ENCODE measurements at regions of chr18 and their contacts with region 1.

Region 1: DNA sequence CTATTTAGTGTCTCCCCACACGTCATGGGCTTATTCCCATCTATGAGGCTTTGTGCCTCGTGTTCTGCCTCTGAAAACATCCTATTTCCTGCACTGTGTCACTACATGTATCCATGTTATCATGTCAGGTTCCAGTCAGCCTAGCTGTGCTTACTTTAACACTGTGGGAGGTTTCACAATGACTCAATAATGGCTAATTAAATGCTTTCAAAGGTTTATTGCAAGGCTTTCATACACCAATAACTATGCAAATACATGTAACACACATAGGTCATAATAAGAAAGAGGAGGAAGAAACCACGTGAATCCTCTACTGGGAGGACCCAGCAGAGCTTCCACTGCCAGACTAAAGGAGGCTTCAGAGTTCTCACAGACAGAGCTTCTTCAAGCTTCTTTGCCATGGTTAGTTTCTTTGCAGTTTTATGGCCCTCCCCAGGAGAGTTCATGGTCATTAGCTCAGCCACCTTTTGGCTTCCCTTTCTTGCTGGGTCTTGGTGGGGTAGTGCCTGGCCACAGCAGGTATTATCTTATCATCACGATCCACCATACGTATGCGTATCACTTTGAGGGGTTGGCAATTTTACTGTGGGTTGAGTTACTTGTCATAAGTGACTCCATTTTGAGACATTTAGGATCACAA is 5.1 kb upstream of the COLEC12 start:
- DNase-seq: peak; percentile 62
- ATAC-seq: peak; percentile 92
- H3K4me3 ChIP-seq: no peak overlapping the region
- H3K27ac ChIP-seq: no peak overlapping the region
- H3K4me1 ChIP-seq: peaks cover 2% of the 10 kb centered on the region; the same call in 1 of the 2 replicates
- H3K27me3 ChIP-seq: peaks cover 5% of the 10 kb centered on the region in 2 experiments; a peak in 1 of 4 replicates
- CTCF ChIP-seq: no peak
- EP300 ChIP-seq: 0 out of 4 replicates have a peak, but pooled peaks of 1 of the 2 experiments have one; percentile 33
- POLR2A ChIP-seq: no peak
- RAD21 ChIP-seq: no peak

Region 2: DNA sequence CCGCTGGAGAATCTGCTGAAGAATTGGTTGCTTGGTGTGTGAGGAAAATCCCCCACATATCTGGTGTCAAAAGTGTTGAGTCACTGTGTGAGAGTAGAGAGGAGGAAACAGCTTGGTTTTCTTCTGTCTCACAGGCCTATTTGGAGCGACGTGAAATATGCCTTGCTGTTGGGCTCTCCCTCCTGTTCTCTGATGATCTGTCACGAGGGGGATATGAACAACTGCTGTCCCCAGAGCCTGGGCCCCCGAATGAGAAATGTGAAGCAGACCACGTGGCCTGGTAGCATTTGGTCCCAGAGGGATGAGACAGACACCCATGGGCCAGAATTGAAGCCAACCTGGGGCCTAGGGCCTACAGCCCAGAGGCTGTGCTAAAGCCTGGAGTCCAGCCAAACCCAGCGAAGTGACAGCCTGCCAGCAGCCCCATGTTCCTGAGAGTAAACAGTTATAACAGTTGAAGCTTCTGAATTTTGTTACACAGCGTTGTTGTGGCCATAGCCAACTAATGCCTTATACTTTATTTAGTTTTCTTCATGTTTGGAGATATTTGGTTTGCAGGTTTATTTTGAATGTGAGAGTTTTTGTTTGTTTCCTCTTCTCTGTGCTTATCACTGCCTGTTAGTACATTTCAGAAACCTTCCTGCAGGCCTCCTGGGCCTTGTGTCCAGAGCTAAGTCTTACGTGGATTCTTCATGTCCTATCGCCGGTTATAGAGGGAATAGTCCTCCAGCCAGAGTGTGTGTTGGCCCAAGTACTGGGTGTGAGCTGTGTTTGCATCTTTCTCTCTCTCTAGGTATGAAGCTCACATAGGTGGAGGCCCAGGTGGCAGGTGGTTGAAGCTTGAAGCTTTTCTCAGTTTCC is 13.6 kb after region 1 on chr18:
- CTCF ChIA-PET with region 1: interaction called, 4 read pairs
- POLR2A ChIA-PET with region 1: interaction called, 4 read pairs
- RAD21 ChIA-PET with region 1: interaction called, 31 read pairs
- SMC1A ChIA-PET with region 1: interaction called, 33 read pairs
- in situ Hi-C with region 1: no loop called
- intact Hi-C with region 1: no loop called
- DNase-seq: peak; percentile 43
- ATAC-seq: peak; percentile 91
- H3K4me3 ChIP-seq: no peak overlapping the region
- H3K27ac ChIP-seq: no peak overlapping the region
- H3K4me1 ChIP-seq: 0 out of 2 replicates have a peak, but pooled peaks cover 3% of the 10 kb centered on the region
- H3K27me3 ChIP-seq: no peaks in the 10 kb centered on the region
- CTCF ChIP-seq: no peak
- EP300 ChIP-seq: no peak; a peak in 1 of 4 replicates
- POLR2A ChIP-seq: no peak
- RAD21 ChIP-seq: no peak

Region 3: DNA sequence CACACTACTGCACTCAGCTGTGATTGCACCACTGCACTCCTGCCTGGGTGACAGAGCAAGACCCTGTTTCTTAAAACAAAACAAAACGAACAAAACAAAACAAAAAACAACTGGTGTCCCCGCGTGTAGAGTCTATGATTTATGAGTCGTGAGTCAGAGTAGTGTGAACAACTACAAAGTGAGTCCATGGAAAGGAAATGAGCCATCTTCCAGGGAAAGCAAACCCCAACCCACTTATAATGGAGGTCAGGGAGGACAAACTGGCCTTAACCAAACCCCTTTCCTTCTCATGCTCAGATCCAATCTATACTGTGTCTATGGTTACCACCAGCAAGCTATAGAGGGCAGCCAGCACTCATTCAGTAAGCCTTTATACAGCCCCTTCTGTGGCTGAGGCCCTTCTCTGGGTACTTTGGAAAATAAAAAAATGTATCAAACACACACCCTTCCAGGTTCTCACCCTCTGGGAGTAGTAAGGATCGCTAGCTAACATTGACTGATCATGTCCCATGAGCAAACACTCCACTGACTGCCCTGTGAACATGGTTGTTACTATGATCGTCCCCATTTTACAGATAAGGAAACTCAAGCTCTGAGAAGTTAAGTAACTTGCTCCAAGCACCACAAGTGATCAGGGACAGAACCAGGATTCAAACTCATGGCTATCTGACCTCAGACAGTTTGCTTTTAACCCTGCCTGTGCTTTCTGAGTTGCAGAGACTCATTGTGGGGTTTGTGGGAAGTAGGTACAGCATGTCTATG is 19.6 kb after region 1 on chr18:
- CTCF ChIA-PET with region 1: interaction called, 4 read pairs
- POLR2A ChIA-PET with region 1: interaction called, 4 read pairs
- RAD21 ChIA-PET with region 1: interaction called, 3 read pairs
- SMC1A ChIA-PET with region 1: interaction called, 33 read pairs
- in situ Hi-C with region 1: no loop called
- intact Hi-C with region 1: no loop called
- DNase-seq: no peak
- ATAC-seq: peak; percentile 61
- H3K4me3 ChIP-seq: no peak overlapping the region
- H3K27ac ChIP-seq: no peak overlapping the region
- H3K4me1 ChIP-seq: no peaks in the 10 kb centered on the region
- H3K27me3 ChIP-seq: no peaks in the 10 kb centered on the region
- CTCF ChIP-seq: no peak
- EP300 ChIP-seq: no peak
- POLR2A ChIP-seq: no peak
- RAD21 ChIP-seq: no peak

Region 4: GRCh38 chr18:543447-544078 is 38.0 kb after region 1 on chr18:
- CTCF ChIA-PET with region 1: no interaction called
- POLR2A ChIA-PET with region 1: no interaction called
- RAD21 ChIA-PET with region 1: no interaction called
- SMC1A ChIA-PET with region 1: no interaction called
- in situ Hi-C with region 1: no loop called
- intact Hi-C with region 1: no loop called
- DNase-seq: no peak
- ATAC-seq: no peak
- H3K4me3 ChIP-seq: no peak overlapping the region
- H3K27ac ChIP-seq: no peak overlapping the region
- H3K4me1 ChIP-seq: no peaks in the 10 kb centered on the region
- H3K27me3 ChIP-seq: no peaks in the 10 kb centered on the region
- CTCF ChIP-seq: no peak
- EP300 ChIP-seq: no peak
- POLR2A ChIP-seq: no peak
- RAD21 ChIP-seq: no peak

Region 5: GRCh38 chr18:564708-565561 is 59.3 kb after region 1 on chr18:
- CTCF ChIA-PET with region 1: no interaction called
- POLR2A ChIA-PET with region 1: no interaction called
- RAD21 ChIA-PET with region 1: no interaction called
- SMC1A ChIA-PET with region 1: no interaction called
- in situ Hi-C with region 1: no loop called
- intact Hi-C with region 1: no loop called
- DNase-seq: no peak
- ATAC-seq: no peak
- H3K4me3 ChIP-seq: no peak overlapping the region
- H3K27ac ChIP-seq: no peak overlapping the region
- H3K4me1 ChIP-seq: no peaks in the 10 kb centered on the region
- H3K27me3 ChIP-seq: no peaks in the 10 kb centered on the region; a peak in 1 of 4 replicates
- CTCF ChIP-seq: no peak
- EP300 ChIP-seq: no peak
- POLR2A ChIP-seq: no peak
- RAD21 ChIP-seq: no peak

Region 6: DNA sequence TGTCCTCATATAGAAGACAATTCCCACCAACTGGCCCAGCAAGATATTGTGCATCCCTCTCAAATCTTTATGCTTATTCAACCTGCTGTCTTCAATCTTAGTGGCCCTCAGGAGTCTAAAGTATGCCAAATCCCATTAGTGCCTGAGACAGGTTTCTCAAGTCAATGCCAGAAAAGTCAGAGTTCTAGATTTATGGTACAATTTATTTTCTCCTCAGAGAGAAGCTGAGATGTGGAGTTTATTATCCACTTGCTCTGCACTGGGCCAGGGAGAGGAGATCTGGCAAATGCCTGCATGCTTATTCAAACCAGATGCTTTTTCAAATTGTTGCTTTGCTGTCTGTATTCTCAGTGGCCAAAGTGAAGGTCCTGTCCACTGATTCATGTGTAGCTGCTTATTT is 1240.5 kb after region 1 on chr18:
- CTCF ChIA-PET with region 1: no interaction called
- POLR2A ChIA-PET with region 1: no interaction called
- RAD21 ChIA-PET with region 1: no interaction called
- SMC1A ChIA-PET with region 1: no interaction called
- in situ Hi-C with region 1: no loop called
- intact Hi-C with region 1: no loop called
- DNase-seq: no peak
- ATAC-seq: no peak
- H3K4me3 ChIP-seq: no peak overlapping the region
- H3K27ac ChIP-seq: no peak overlapping the region
- H3K4me1 ChIP-seq: no peaks in the 10 kb centered on the region
- H3K27me3 ChIP-seq: no peaks in the 10 kb centered on the region
- CTCF ChIP-seq: no peak
- EP300 ChIP-seq: no peak
- POLR2A ChIP-seq: no peak
- RAD21 ChIP-seq: no peak